ENCODE measurements at regions of chr1 and their contacts with region 1.

Region 1: DNA sequence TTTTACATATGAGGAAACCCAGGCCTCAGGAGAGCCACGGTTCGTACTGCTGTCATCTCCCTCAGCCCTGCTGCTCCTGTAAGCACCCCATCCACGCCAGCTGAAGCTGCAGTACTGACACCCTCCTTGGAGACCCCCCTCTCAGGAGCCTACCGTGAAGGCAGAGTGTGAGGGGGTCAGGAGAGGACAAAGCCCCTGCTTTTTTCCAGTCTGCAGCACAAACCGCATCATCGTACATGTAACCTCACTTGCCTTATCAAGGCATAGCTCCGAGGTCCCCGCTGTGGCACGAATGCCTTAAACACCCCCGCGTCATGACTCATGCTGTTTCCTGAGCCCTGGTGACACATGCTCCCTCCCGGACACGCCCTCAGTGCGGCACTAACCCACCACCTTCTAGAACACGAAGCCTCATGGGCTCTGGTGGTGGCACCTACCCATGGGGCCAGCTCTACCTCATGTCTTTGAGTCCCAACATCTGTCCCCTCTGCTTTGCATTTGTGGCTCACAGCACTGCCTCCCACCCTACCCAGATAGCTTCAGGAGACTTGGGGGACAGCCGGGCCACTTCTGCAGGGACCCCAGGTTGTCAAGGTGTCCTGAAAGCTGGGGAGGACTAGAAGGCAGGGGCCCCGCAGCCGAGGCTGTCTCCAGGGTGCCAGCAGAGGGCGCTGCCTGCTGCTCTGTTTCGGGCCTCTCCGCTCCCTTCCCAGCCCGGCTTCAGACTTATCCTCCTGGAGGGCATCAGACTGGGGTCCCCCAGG is 4.9 kb downstream of the SH3BGRL3 start:
- DNase-seq: peak; percentile 76 to 98 (median 94)
- ATAC-seq: peak; percentile 70
- H3K4me3 ChIP-seq: peak overlapping the region; percentile 44
- H3K4me3 Mint-ChIP-seq: peak overlapping the region; percentile 89
- H3K27ac ChIP-seq: peak overlapping the region; percentile 89 to 94
- H3K27ac Mint-ChIP-seq: peak overlapping the region; percentile 95
- H3K4me1 ChIP-seq: peaks cover 96% of the 10 kb centered on the region
- H3K4me1 Mint-ChIP-seq: peaks cover 92% of the 10 kb centered on the region
- H3K27me3 ChIP-seq: no peaks in the 10 kb centered on the region
- H3K27me3 Mint-ChIP-seq: no peaks in the 10 kb centered on the region
- CTCF ChIP-seq: peak; percentile 83

Region 2: DNA sequence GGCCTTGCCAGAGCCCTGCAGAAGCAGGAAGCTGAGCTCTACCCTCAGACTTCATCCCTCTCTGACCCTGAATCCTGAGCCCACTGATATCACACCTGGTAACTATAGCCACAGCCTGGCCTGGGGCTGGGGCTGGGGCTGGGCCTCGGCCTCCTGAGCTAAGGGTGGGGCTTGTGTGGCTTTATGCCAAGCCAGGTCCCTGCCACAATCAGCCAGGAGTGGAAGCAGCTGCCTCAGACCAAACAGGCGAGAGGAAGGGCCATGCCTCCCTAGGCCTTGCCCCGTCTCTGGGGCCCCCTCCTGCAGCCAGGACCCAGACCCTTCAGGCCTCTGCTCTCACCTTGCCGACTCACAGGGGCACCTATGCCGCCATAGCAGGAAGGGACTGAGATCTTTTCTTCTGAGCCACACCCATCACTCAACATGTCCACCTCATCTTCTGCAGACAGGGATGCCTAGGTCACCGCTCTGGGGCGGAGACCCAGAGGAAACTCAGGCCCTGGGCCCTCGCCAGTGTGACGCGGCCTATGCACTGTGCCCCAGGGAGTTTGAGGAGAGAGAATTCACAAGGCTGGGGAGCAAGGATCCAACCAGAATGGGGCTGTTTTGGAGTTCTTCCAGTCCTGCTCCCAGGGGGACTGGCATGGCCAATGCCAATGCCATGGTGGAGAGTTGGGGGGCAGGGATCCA is 16.0 kb after region 1 on chr1:
- CTCF ChIA-PET with region 1: interaction called, 10 read pairs
- POLR2A ChIA-PET with region 1: interaction called, 270 read pairs
- intact Hi-C with region 1: no loop called
- DNase-seq: no peak
- ATAC-seq: no peak
- H3K4me3 ChIP-seq: no peak overlapping the region
- H3K4me3 Mint-ChIP-seq: no peak overlapping the region
- H3K27ac ChIP-seq: no peak overlapping the region
- H3K27ac Mint-ChIP-seq: peak overlapping the region; percentile 47
- H3K4me1 ChIP-seq: peaks cover 28% of the 10 kb centered on the region
- H3K4me1 Mint-ChIP-seq: peaks cover 18% of the 10 kb centered on the region
- H3K27me3 ChIP-seq: no peaks in the 10 kb centered on the region
- H3K27me3 Mint-ChIP-seq: no peaks in the 10 kb centered on the region
- CTCF ChIP-seq: no peak

Region 3: DNA sequence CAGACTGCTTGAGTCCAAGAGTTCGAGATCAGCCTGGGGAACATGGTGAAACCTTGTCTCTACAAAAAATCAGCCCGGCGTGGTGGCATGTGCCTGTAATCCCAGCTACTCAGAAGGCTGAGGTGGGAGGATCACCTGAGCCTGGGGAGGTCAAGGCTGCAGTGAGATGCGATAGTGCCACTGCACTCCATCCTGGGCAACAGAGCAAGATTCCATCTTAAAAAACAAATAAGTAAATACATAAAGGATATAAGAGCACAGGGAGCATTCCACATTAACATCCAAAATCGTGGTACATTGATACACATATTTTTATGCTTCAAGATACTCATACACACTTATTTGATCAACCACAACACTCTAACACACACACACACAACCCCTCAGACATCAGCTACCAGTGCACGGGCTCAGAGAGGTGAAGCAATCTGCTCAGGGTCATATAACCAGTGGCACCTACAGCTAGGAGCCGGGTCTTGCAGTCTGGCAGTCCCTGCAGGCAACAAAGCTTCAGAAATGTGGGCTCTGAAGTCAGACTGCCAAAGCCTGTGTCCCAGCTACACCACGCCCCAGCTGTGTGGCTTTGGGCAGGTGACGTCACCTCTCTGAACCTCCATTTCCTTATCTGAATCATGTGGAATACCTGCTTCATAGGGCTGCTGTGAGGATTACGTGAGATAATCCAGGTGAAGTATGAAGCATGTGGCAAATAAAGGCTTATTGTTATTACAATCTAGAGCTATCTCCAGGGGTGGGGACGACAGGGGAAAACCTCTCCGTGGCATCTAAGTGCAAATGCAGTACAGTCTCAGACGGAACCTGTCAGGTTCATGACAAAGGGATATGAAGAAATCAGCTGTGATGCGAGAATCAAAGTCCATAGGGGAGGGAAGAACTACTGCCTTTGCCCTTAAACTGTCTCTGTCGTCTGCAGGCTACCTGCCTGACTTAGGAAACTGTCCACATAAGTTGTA is 73.9 kb after region 1 on chr1:
- CTCF ChIA-PET with region 1: interaction called, 7 read pairs
- POLR2A ChIA-PET with region 1: interaction called, 12 read pairs
- intact Hi-C with region 1: loop called in 1 of 2 experiments (anchors 5 kb)
- DNase-seq: peak; percentile 52 to 93 (median 67)
- ATAC-seq: peak; percentile 89
- H3K4me3 ChIP-seq: peak overlapping the region; percentile 2
- H3K4me3 Mint-ChIP-seq: peak overlapping the region; percentile 52
- H3K27ac ChIP-seq: no peak overlapping the region
- H3K27ac Mint-ChIP-seq: peak overlapping the region; percentile 68
- H3K4me1 ChIP-seq: peaks cover 56% of the 10 kb centered on the region
- H3K4me1 Mint-ChIP-seq: peaks cover 42% of the 10 kb centered on the region
- H3K27me3 ChIP-seq: peaks cover 0 to 23% of the 10 kb centered on the region in 2 experiments
- H3K27me3 Mint-ChIP-seq: peaks cover 27% of the 10 kb centered on the region
- CTCF ChIP-seq: no peak

Region 4: GRCh38 chr1:26391450-26391849 is 106.7 kb after region 1 on chr1:
- CTCF ChIA-PET with region 1: interaction called, 16 read pairs
- POLR2A ChIA-PET with region 1: interaction called, 6 read pairs
- intact Hi-C with region 1: no loop called
- DNase-seq: peak in 12 of 14 experiments; percentile 21 to 80 (median 36)
- ATAC-seq: peak; percentile 69
- H3K4me3 ChIP-seq: no peak overlapping the region
- H3K4me3 Mint-ChIP-seq: no peak overlapping the region
- H3K27ac ChIP-seq: no peak overlapping the region
- H3K27ac Mint-ChIP-seq: no peak overlapping the region
- H3K4me1 ChIP-seq: peaks cover 41% of the 10 kb centered on the region
- H3K4me1 Mint-ChIP-seq: peaks cover 20% of the 10 kb centered on the region
- H3K27me3 ChIP-seq: no peaks in the 10 kb centered on the region
- H3K27me3 Mint-ChIP-seq: no peaks in the 10 kb centered on the region
- CTCF ChIP-seq: peak; percentile 68

Region 5: DNA sequence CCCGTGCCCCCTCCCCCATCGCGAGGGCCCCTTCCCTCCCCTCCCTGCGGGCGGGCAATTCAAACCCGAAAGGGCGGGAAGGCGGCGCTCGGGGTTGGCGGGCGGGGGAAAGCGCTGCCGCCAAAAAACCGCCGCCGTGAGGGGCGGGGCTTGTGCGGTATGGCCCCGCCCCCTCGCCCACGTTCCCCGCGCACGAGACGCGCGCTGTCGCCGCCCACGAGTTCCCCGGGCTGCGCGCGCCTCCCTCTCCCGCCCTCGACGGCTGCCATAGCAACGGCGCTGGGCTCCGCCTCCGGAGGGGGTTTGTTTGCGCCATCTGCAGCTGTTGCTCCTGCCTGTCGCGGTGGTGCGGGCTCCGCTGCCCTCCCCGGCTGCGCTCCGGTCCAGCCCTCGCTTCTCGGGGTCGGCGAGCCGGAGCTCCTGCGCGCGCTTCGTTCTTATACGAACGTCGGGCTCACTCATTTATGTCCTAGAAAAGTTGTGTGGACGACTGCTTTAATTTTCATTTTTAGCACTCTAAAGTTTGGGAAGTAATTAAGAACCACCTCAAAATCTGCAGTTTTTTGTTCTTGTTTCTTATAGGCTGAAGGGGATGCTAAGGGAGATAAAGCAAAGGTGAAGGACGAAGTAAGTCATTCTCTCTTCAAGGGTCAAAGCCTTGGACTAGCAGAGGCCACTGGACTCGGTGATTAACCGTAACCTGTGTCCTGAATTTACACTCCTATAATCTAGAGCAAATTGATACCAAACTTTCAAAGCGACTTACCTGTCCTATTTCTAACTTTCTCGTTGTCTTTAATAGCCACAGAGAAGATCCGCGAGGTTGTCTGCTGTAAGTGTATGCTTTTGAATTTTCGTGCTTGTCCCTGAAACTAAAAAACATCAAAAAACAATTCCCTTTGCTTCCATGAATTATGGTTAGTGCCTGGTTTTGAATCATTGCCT is 188.4 kb after region 1 on chr1:
- CTCF ChIA-PET with region 1: no interaction called
- POLR2A ChIA-PET with region 1: interaction called, 16 read pairs
- intact Hi-C with region 1: loop called in 1 of 2 experiments (anchors 5 kb)
- DNase-seq: peak; percentile 93 to 99 (median 96)
- ATAC-seq: peak; percentile 77
- H3K4me3 ChIP-seq: peak overlapping the region; percentile 78
- H3K4me3 Mint-ChIP-seq: peak overlapping the region; percentile 89
- H3K27ac ChIP-seq: peak overlapping the region; percentile 90 to 95
- H3K27ac Mint-ChIP-seq: peak overlapping the region; percentile 99
- H3K4me1 ChIP-seq: peaks cover 36% of the 10 kb centered on the region
- H3K4me1 Mint-ChIP-seq: peaks cover 53% of the 10 kb centered on the region
- H3K27me3 ChIP-seq: no peaks in the 10 kb centered on the region
- H3K27me3 Mint-ChIP-seq: no peaks in the 10 kb centered on the region
- CTCF ChIP-seq: no peak